ENCODE measurements at regions of chr19 and their contacts with region 1.

Region 1: GRCh38 chr19:20661150-20661819 is at the start of gene ZNF626:
- DNase-seq: peak; percentile 84 to 96 (median 89)
- H3K4me3 ChIP-seq: peak within 1 kb of the TSS; percentile 93
- H3K4me3 Mint-ChIP-seq: peak within 1 kb of the TSS; percentile 92 to 98 (median 94)
- H3K27ac ChIP-seq: peak within 1 kb of the TSS; percentile 81
- H3K27ac Mint-ChIP-seq: peak within 1 kb of the TSS; percentile 82 to 97 (median 96)
- H3K4me1 ChIP-seq: peaks cover 7% of the 10 kb centered on the region
- H3K4me1 Mint-ChIP-seq: peaks cover 51 to 81% (median 57%) of the 10 kb centered on the region in 3 donors
- H3K27me3 ChIP-seq: no peaks in the 10 kb centered on the region
- H3K27me3 Mint-ChIP-seq: peaks cover 0 to 1% of the 10 kb centered on the region in 2 donors
- total RNA-seq, gene ZNF626: 9.9 to 11.2 TPM

Region 2: DNA sequence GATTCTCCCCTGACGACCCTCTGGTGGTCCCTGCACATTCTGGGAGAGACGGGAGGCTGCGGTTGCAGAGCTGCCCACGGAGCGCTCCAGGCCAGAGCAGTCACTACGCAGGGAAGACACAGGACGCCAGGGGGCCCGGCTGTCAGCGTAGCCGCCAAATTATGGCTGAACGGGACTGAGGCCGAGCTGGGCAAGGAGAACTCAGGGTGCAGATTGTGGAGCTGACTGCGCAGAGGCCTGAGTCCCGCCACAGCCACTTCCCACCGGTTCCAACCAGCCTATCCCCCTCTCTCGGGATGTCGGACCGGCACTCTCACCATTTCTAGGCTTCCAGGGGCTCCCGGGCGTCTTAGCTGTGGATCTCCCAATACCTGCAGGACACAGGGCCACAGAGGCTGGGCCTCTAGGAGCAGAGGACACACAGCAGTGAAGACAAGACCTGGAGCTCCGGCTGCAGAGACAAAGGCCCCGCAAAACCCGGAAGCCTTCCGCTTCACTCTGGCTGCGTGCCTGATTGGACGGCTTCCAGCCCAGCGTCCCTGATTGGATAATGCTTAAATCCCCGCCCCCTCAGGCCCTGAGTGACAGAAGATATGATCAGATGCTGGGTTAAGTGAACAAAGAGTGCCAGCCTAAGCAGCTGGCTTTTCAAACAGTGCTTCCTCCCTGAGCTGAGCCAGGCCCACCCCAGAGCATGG is 95.8 kb before region 1 on chr19 and contains the start of gene ZNF737:
- CTCF ChIA-PET with region 1: interaction called, 14 read pairs
- POLR2A ChIA-PET with region 1: interaction called, 30 read pairs
- DNase-seq: peak; percentile 85 to 96 (median 90)
- H3K4me3 ChIP-seq: peak within 1 kb of the TSS; percentile 88
- H3K4me3 Mint-ChIP-seq: peak within 1 kb of the TSS; percentile 96 to 100 (median 100)
- H3K27ac ChIP-seq: peak within 1 kb of the TSS; percentile 85
- H3K27ac Mint-ChIP-seq: peak within 1 kb of the TSS; percentile 96 to 100 (median 99)
- H3K4me1 ChIP-seq: peaks cover 6% of the 10 kb centered on the region
- H3K4me1 Mint-ChIP-seq: peaks cover 31 to 46% (median 42%) of the 10 kb centered on the region in 3 donors
- H3K27me3 ChIP-seq: no peaks in the 10 kb centered on the region
- H3K27me3 Mint-ChIP-seq: no peaks in the 10 kb centered on the region
- total RNA-seq, gene ZNF737: 12.5 to 14.3 TPM

Region 3: DNA sequence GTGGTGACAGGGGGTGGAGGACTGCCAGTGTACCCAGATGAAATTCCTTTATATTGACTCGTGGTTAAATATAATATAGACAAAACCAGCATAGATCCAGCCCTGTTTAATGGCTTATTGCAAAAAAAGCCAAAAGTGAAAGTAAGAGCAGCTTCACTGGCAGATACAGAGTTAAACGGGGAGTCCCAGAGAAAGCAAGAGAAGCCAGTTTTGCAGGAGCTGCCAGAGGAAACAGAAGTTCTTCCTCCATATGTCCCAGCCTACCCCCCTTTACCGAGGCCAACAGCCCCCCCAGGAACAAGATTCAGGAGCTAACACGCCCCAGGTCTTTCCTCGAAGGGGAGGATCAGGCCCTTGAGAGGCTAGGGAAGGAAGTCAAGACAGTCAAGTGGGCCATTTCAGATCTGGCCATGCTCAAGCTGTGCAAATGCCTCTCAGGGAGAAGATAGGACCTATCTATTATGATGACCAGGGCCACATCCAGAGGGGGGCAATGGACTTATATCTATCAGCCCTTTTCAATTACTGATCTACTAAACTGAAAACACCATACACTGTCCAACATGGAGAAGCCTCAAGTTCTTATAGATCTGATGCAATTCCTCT is 48.5 kb before region 1 on chr19:
- CTCF ChIA-PET with region 1: no interaction called
- POLR2A ChIA-PET with region 1: no interaction called
- DNase-seq: no peak
- H3K4me3 ChIP-seq: no peak overlapping the region
- H3K4me3 Mint-ChIP-seq: peak overlapping the region in 3 of 7 donors; percentile 1 to 30 (median 23)
- H3K27ac ChIP-seq: no peak overlapping the region
- H3K27ac Mint-ChIP-seq: no peak overlapping the region
- H3K4me1 ChIP-seq: no peaks in the 10 kb centered on the region
- H3K4me1 Mint-ChIP-seq: peaks cover 7 to 10% (median 9%) of the 10 kb centered on the region in 3 donors
- H3K27me3 ChIP-seq: no peaks in the 10 kb centered on the region
- H3K27me3 Mint-ChIP-seq: peaks cover 0 to 1% of the 10 kb centered on the region in 2 donors

Region 4: GRCh38 chr19:20640545-20640944 is 20.7 kb before region 1 on chr19:
- CTCF ChIA-PET with region 1: no interaction called
- POLR2A ChIA-PET with region 1: no interaction called
- DNase-seq: no peak
- H3K4me3 ChIP-seq: no peak overlapping the region
- H3K4me3 Mint-ChIP-seq: no peak overlapping the region
- H3K27ac ChIP-seq: no peak overlapping the region
- H3K27ac Mint-ChIP-seq: peak overlapping the region in 1 of 8 donors; percentile 47
- H3K4me1 ChIP-seq: no peaks in the 10 kb centered on the region
- H3K4me1 Mint-ChIP-seq: peaks cover 0 to 10% (median 8%) of the 10 kb centered on the region in 3 donors
- H3K27me3 ChIP-seq: no peaks in the 10 kb centered on the region
- H3K27me3 Mint-ChIP-seq: no peaks in the 10 kb centered on the region

Region 5: DNA sequence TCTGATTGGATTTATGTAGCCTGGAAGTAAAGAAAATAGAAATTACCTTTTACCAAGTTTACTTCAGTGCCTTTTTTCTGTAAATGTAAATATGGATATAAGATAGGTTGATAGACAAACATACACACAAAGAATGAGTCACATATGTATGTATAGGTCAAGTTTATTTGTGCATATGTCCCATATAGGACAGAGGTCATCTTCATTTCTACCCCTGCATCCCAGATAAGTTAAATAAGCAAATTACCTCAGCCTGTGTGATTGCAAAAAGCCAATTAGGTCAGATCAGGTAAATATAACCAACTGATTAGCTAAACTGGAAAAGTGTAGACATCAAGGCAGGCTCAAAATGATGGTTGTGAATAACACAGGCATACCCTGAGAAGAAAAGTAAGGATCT is 65.5 kb after region 1 on chr19:
- CTCF ChIA-PET with region 1: no interaction called
- POLR2A ChIA-PET with region 1: no interaction called
- DNase-seq: no peak
- H3K4me3 ChIP-seq: no peak overlapping the region
- H3K4me3 Mint-ChIP-seq: no peak overlapping the region
- H3K27ac ChIP-seq: no peak overlapping the region
- H3K27ac Mint-ChIP-seq: no peak overlapping the region
- H3K4me1 ChIP-seq: no peaks in the 10 kb centered on the region
- H3K4me1 Mint-ChIP-seq: no peaks in the 10 kb centered on the region
- H3K27me3 ChIP-seq: no peaks in the 10 kb centered on the region
- H3K27me3 Mint-ChIP-seq: peaks cover 1 to 12% of the 10 kb centered on the region in 2 donors

Region 6: GRCh38 chr19:20776083-20777076 is 115.1 kb after region 1 on chr19 and contains the start of gene ZNF66:
- CTCF ChIA-PET with region 1: interaction called, 3 read pairs
- POLR2A ChIA-PET with region 1: interaction called, 15 read pairs
- DNase-seq: peak; percentile 88 to 96 (median 93)
- H3K4me3 ChIP-seq: peak within 1 kb of the TSS; percentile 99
- H3K4me3 Mint-ChIP-seq: peak within 1 kb of the TSS; percentile 97 to 100 (median 99)
- H3K27ac ChIP-seq: peak within 1 kb of the TSS; percentile 89
- H3K27ac Mint-ChIP-seq: peak within 1 kb of the TSS; percentile 82 to 99 (median 96)
- H3K4me1 ChIP-seq: no peaks in the 10 kb centered on the region
- H3K4me1 Mint-ChIP-seq: peaks cover 23 to 45% (median 38%) of the 10 kb centered on the region in 3 donors
- H3K27me3 ChIP-seq: no peaks in the 10 kb centered on the region
- H3K27me3 Mint-ChIP-seq: peaks cover 0 to 3% of the 10 kb centered on the region in 2 donors
- total RNA-seq, gene ZNF66: 7.4 to 8.6 TPM